Cardiac septum (tissue), 1 donor: ENCODE measurements at regions of chr9 and their contacts with region 1.

Region 1: DNA sequence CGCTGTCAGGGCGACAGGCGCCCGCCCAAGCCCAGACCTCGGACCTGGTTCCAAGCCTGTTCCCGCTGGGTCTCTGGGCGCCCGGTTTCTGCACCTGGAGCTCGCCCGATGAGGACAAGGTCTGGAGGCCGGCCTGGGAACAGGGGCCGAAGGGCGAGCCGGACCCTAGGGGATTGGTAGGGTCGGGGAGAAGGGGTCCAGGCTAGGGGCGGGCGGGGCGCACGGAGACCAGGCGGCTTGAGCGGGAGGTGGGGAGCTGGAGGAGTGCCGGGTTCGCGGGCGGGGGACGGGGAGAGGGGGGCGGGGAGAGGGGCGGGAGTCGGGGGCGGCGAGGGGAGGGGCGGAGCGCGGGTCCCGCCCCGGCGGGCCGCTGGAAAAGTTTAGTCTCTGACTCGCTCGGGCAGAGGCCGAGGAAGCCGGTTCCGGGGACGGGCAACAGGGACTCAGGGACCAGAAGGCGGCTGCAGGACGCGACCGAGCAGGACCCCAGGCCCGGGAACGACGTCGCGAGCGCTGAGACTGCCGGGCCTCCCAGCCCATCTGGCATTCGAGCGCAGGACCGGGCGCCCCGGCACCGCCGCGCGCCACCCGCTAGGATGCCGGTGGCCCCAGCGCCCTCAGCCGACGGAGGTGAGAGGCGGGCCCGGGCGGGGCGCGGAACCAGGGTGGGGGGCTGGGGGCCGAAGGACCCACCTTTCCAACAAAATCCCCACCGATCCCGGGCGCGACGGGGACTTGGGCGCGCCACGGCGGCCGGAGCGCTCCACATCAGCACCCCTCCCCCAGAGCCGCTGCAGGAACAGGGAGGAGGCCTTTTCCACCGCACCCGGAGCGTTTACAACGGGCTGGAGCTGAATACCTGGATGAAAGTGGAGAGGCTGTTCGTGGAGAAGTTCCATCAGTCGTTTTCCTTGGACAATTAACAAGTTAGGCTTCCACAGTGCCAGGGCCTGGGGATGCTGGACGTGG is at the start of gene S1PR3:
- DNase-seq: peak; percentile 83
- total RNA-seq, gene S1PR3: 9.9 TPM

Region 2: GRCh38 chr9:88747768-88748167 is 243.6 kb before region 1 on chr9:
- intact Hi-C with region 1: loop called (anchors 5 kb)
- DNase-seq: no peak

Region 3: GRCh38 chr9:88920650-88921049 is 70.7 kb before region 1 on chr9:
- intact Hi-C with region 1: no loop called
- DNase-seq: no peak

Region 4: GRCh38 chr9:88953381-88954029 is 37.8 kb before region 1 on chr9:
- intact Hi-C with region 1: loop called (anchors 5 kb)
- DNase-seq: no peak

Region 5: DNA sequence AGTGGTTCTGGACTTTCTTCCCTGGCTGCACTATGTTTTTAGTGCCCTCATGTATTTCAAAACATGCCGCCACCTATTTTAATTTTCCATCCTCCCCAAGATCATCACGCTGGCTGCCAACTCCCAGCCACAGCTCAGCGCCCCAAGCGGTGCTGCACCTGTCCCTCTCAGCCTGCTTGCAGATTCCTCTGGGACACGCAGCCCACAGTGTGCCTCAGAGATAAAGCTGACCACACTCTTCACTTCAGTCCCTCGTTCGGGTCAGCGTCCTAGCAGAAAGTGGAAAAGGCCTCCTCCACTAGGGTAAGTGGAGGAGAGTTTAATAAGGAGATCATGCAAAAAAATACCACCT is 263.4 kb after region 1 on chr9:
- intact Hi-C with region 1: no loop called
- DNase-seq: no peak